Heart right ventricle (tissue), 16 donors: ENCODE measurements at regions of chr3 and their contacts with region 1.

Region 1: DNA sequence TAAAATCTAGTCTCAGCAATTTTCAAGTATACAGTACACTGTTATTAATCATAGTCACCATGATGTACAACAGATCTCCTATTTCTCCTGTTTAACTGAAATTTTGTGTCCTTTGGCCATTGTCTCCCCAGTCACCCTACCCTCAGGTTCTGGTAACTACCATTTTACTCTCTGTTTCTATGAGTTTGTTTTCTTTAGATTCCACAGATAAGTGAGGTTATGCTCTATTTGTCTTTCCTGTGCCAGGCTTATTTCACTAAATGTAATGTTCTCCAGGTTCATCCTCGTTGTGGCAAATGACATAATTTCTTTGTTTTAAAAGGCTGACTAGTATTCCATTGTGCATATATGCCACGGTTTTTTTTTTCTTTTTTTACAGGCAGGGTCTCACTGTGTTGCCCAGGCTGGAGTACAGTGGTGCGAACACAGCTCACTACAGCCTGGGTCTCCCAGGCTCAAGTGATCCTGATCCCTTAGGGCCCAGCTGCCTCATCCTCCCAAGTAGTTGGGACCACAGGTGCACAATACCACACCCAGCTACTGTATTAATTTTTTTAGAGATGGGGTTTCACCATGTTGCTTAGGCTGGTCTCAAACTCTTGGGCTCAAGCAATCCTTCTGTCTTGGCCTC is 50.0 kb downstream of the RAB7A start:
- DNase-seq: no peak
- ATAC-seq: no peak
- H3K4me3 ChIP-seq: no peak overlapping the region
- H3K27ac ChIP-seq: no peak overlapping the region
- H3K4me1 ChIP-seq: peaks cover 5 to 82% (median 67%) of the 10 kb centered on the region in 9 donors
- H3K27me3 ChIP-seq: no peaks in the 10 kb centered on the region
- CTCF ChIP-seq: no peak

Region 2: DNA sequence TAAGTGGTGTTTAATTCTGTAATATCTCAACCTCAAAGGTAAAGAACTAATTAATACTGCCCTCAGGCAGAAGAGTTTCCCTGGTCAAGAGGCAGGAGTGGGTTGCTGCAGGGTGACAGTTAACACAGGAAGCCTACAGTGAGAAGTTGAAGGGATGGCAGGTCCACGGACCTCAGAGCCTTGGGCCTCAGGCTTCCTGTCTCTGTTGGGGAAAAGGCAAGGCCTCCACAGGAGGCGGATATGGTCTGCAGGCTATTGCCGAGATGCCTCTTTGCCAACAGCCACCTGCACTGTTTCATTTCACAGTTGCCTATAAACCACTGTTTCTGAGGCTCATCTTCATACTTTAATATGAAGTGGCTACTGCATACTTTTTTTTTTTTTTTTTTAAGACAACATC is 92.1 kb before region 1 on chr3:
- intact Hi-C with region 1: no loop called
- DNase-seq: no peak
- ATAC-seq: no peak
- H3K4me3 ChIP-seq: no peak overlapping the region
- H3K27ac ChIP-seq: no peak overlapping the region
- H3K4me1 ChIP-seq: peaks cover 0 to 21% (median 8%) of the 10 kb centered on the region in 9 donors
- H3K27me3 ChIP-seq: no peaks in the 10 kb centered on the region
- CTCF ChIP-seq: no peak

Region 3: GRCh38 chr3:128736601-128737000 is 39.4 kb before region 1 on chr3:
- intact Hi-C with region 1: loop called in 2 of 10 experiments (anchors 2 to 5 kb)
- DNase-seq: no peak
- ATAC-seq: peak in 1 of 8 donors; percentile 40
- H3K4me3 ChIP-seq: no peak overlapping the region
- H3K27ac ChIP-seq: no peak overlapping the region
- H3K4me1 ChIP-seq: peaks cover 6 to 89% (median 69%) of the 10 kb centered on the region in 9 donors
- H3K27me3 ChIP-seq: no peaks in the 10 kb centered on the region
- CTCF ChIP-seq: no peak